Mammary epithelial cell (primary cell): ENCODE measurements at regions of chr11 and their contacts with region 1.

Region 1: GRCh38 chr11:130726234-130727037 is 189.8 kb downstream of the SNX19 start:
- DNase-seq: no peak
- H3K4me3 ChIP-seq: no peak overlapping the region
- H3K27ac ChIP-seq: no peak overlapping the region
- H3K4me1 ChIP-seq: peaks cover 26% of the 10 kb centered on the region
- H3K27me3 ChIP-seq: no peaks in the 10 kb centered on the region
- CTCF ChIP-seq: no peak

Region 2: DNA sequence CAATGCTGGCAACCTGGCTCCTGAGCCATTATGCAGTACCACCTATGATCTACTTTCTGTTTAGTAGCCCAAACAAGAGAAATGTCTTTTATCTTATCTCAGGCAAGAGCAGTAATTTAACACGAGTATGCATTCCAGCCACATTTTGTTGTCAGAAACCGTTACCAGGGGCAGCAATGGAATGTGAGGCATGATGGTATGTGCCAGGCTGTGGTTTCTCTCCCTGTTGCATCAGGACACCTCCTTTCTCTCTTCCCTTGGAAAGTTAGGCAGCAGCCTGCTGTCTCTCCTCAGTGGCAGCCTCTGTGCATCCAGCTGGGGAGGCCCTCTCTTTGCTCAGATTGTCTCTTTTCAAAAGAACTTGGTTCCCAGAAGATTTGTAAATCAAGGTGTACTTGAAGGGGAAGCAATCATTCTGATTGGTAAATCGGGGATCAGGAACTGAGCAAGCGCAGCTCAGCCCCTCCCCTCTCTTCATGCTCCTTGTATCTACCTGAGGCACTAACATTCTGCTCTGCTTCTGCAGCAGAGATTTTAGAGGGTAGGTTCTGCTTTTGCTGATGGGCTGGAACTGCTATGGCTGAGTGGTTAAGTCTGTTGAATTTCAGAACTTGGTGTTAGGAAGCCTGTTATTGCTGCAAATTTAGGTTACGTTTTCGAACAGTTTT is 48.8 kb before region 1 on chr11:
- CTCF ChIA-PET with region 1: no interaction called
- dilution Hi-C with region 1: loop called (anchors 5 kb)
- in situ Hi-C with region 1: no loop called
- intact Hi-C with region 1: no loop called
- DNase-seq: peak; percentile 83
- H3K4me3 ChIP-seq: peak overlapping the region in 1 of 3 experiments; percentile 9
- H3K27ac ChIP-seq: peak overlapping the region; percentile 75
- H3K4me1 ChIP-seq: peaks cover 29% of the 10 kb centered on the region
- H3K27me3 ChIP-seq: no peaks in the 10 kb centered on the region
- CTCF ChIP-seq: no peak

Region 3: GRCh38 chr11:130689222-130689908 is 37.1 kb before region 1 on chr11:
- CTCF ChIA-PET with region 1: no interaction called
- dilution Hi-C with region 1: no loop called
- in situ Hi-C with region 1: no loop called
- intact Hi-C with region 1: loop called (anchors 5 kb)
- DNase-seq: no peak
- H3K4me3 ChIP-seq: no peak overlapping the region
- H3K27ac ChIP-seq: no peak overlapping the region
- H3K4me1 ChIP-seq: no peaks in the 10 kb centered on the region
- H3K27me3 ChIP-seq: no peaks in the 10 kb centered on the region
- CTCF ChIP-seq: no peak

Region 4: GRCh38 chr11:130772266-130773227 is 46.1 kb after region 1 on chr11:
- CTCF ChIA-PET with region 1: no interaction called
- dilution Hi-C with region 1: no loop called
- in situ Hi-C with region 1: no loop called
- intact Hi-C with region 1: no loop called
- DNase-seq: peak; percentile 89
- H3K4me3 ChIP-seq: no peak overlapping the region
- H3K27ac ChIP-seq: no peak overlapping the region
- H3K4me1 ChIP-seq: peaks cover 23% of the 10 kb centered on the region
- H3K27me3 ChIP-seq: no peaks in the 10 kb centered on the region
- CTCF ChIP-seq: no peak

Region 5: DNA sequence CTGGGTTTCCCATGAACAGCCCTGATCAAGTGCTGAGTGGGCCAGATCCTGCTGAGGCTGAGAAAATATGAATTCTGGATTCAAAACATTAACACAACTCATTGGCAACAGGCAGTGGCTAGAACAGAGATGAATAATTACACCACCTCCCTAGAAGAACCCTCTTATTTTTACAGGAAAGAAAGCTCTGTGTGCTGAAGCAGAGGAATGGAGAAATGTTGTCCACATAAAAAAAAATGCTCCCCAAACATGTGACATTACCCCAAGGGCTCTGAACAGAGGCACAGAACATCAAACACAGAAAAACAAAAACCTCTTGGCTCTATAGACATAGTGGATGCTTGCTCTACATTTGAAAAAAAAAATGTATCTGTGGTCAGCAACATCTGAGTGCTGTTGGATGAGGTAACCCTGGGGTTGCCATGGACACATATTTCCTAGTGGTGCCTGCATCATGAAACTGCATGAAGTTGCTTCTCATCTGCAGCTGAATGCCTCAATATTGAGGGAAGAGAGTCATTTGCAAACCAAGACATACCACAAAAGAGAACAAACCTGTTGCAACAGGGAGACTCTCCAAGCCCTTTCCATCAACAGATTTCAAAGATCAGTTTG is 91.0 kb after region 1 on chr11:
- CTCF ChIA-PET with region 1: no interaction called
- dilution Hi-C with region 1: no loop called
- in situ Hi-C with region 1: no loop called
- intact Hi-C with region 1: no loop called
- DNase-seq: peak; percentile 61
- H3K4me3 ChIP-seq: no peak overlapping the region
- H3K27ac ChIP-seq: no peak overlapping the region
- H3K4me1 ChIP-seq: no peaks in the 10 kb centered on the region
- H3K27me3 ChIP-seq: no peaks in the 10 kb centered on the region
- CTCF ChIP-seq: no peak

Region 6: GRCh38 chr11:130847517-130847916 is 121.1 kb after region 1 on chr11:
- CTCF ChIA-PET with region 1: no interaction called
- dilution Hi-C with region 1: loop called (anchors 10 kb)
- in situ Hi-C with region 1: no loop called
- intact Hi-C with region 1: no loop called
- DNase-seq: peak; percentile 99
- H3K4me3 ChIP-seq: peak overlapping the region; percentile 2 to 27 (median 16)
- H3K27ac ChIP-seq: peak overlapping the region; percentile 98
- H3K4me1 ChIP-seq: peaks cover 37% of the 10 kb centered on the region
- H3K27me3 ChIP-seq: no peaks in the 10 kb centered on the region
- CTCF ChIP-seq: no peak